Activated T-helper 1 cell treated with anti-CD3 and anti-CD28 coated beads, Interleukin-12 subunit alpha, Interleukin-12 subunit beta, Interleukin-2, Interleukin-4 antibody, amounts not matched to agents 30 ng/mL and 10 ng/mL and 1 ng/mL, durations not matched to agents 14 hours and 24 hours and 36 hours (primary cell): ENCODE measurements at regions of chr6 and their contacts with region 1.

Region 1: DNA sequence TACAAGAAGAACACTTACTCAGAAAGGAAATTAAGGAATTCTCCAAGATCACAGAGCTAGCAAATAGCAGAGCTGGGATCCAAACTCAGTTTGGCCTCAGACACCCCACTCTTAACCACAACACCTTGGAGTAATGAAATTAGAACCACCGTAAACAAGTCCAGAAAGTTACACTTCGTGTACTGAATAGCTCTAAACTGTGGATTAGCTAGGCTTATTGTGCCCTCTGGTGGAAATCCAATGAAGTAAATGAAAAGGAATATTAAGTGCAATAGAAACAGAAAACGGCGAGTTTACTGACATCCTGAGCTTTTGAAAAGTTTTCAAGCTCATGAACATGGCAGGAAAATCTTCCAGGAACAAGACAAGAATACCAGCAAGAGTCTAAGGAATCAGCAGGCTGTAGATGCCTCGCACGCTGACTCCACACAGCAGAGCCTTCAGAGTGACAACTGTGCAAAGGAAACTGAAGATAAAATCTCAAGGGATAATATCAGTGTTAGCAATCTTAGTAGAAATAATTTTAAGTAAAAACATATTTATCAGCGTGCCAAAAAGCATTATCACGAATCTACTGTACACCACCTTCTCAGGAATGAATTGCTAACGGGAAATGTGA is 34.6 kb downstream of the FBXO5 start:
- DNase-seq: no peak
- H3K4me3 Mint-ChIP-seq: no peak overlapping the region
- H3K27ac Mint-ChIP-seq: no peak overlapping the region
- H3K4me1 Mint-ChIP-seq: peaks cover 8% of the 10 kb centered on the region
- H3K27me3 Mint-ChIP-seq: peaks cover 15% of the 10 kb centered on the region

Region 2: GRCh38 chr6:152478377-152479010 is 469.8 kb before region 1 on chr6:
- intact Hi-C with region 1: no loop called
- DNase-seq: no peak
- H3K4me3 Mint-ChIP-seq: no peak overlapping the region
- H3K27ac Mint-ChIP-seq: no peak overlapping the region
- H3K4me1 Mint-ChIP-seq: no peaks in the 10 kb centered on the region
- H3K27me3 Mint-ChIP-seq: peaks cover 2% of the 10 kb centered on the region

Region 3: GRCh38 chr6:152552616-152553209 is 395.5 kb before region 1 on chr6:
- intact Hi-C with region 1: loop called (anchors 5 kb)
- DNase-seq: no peak
- H3K4me3 Mint-ChIP-seq: no peak overlapping the region
- H3K27ac Mint-ChIP-seq: no peak overlapping the region
- H3K4me1 Mint-ChIP-seq: no peaks in the 10 kb centered on the region
- H3K27me3 Mint-ChIP-seq: no peaks in the 10 kb centered on the region

Region 4: DNA sequence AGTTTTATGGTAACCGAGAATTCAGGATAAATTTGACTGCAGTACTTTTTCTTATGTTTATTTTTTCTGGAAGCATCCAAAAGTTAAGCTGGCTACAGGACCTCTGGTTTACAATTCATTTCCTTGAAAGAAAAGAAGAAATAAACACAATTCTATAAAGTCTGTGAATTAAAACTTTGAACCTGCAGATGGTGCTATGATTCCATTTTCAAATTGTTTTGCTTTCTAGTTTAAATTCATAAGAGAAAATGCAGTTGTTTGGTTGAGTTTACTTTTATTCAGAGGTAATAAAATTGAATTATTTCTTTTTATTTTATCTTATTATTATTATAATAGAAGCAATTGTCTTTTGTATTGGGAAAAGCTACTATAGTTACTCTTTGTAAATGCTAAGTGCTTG is 199.4 kb before region 1 on chr6:
- intact Hi-C with region 1: loop called (anchors 2 kb)
- DNase-seq: no peak
- H3K4me3 Mint-ChIP-seq: no peak overlapping the region
- H3K27ac Mint-ChIP-seq: no peak overlapping the region
- H3K4me1 Mint-ChIP-seq: no peaks in the 10 kb centered on the region
- H3K27me3 Mint-ChIP-seq: no peaks in the 10 kb centered on the region

Region 5: DNA sequence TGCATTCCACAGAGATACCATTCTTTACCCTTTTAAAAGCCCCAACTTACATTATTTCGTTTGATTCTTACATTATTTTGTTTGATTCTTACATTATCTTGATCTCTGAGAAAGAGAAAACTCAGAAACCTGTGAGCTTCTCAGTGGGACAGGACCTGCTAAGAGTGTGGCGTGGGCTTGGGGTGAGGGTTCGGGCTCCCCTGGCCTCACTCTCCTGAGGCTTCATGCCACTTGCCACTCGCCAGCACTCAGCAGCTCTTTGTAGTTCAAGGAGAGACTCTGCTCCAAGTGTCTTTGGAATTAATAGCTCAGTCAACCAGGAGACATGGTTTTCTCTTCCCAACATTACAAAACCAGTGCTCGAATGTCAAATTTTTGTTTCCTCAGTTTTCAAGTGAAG is 315.2 kb after region 1 on chr6:
- intact Hi-C with region 1: no loop called
- DNase-seq: no peak
- H3K4me3 Mint-ChIP-seq: no peak overlapping the region
- H3K27ac Mint-ChIP-seq: no peak overlapping the region
- H3K4me1 Mint-ChIP-seq: no peaks in the 10 kb centered on the region
- H3K27me3 Mint-ChIP-seq: peaks cover 2% of the 10 kb centered on the region

Region 6: DNA sequence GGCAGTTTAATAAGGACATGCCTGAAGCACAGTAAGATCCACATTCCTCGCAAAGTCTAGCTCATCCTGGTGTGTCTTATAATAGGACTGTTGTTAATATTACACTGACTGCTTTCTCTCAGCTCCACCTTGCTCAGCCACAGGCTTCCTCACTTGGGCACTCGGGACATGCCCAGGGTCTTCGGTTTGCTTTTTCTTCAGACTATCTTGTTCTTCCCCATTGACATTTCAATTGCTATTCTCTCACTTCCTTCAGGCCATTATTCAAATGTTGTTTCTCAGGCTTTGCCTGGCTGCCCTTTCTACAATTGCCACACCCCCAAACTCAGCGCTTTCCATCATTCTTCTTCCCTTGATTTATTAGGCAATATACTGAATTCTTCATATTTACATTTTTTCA is 457.7 kb after region 1 on chr6:
- intact Hi-C with region 1: no loop called
- DNase-seq: no peak
- H3K4me3 Mint-ChIP-seq: no peak overlapping the region
- H3K27ac Mint-ChIP-seq: no peak overlapping the region
- H3K4me1 Mint-ChIP-seq: no peaks in the 10 kb centered on the region
- H3K27me3 Mint-ChIP-seq: no peaks in the 10 kb centered on the region